Gastrocnemius medialis (tissue), 4 donors: ENCODE measurements at regions of chr7 and their contacts with region 1.

Region 1: GRCh38 chr7:121195874-121196755 is 132.7 kb upstream of the WNT16 start:
- DNase-seq: no peak
- ATAC-seq: no peak
- H3K4me3 ChIP-seq: no peak overlapping the region
- H3K27ac ChIP-seq: peak overlapping the region; percentile 79 to 90 (median 83)
- H3K4me1 ChIP-seq: peaks cover 71 to 91% of the 10 kb centered on the region in 2 donors
- H3K27me3 ChIP-seq: no peaks in the 10 kb centered on the region
- CTCF ChIP-seq: no peak
- POLR2A ChIP-seq: no peak

Region 2: GRCh38 chr7:120996333-120996987 is 199.7 kb before region 1 on chr7:
- in situ Hi-C with region 1: no loop called
- intact Hi-C with region 1: loop called (anchors 10 kb)
- DNase-seq: peak; percentile 71 to 72
- ATAC-seq: no peak
- H3K4me3 ChIP-seq: no peak overlapping the region
- H3K27ac ChIP-seq: peak overlapping the region; percentile 91 to 98 (median 94)
- H3K4me1 ChIP-seq: peaks cover 82 to 90% of the 10 kb centered on the region in 2 donors
- H3K27me3 ChIP-seq: no peaks in the 10 kb centered on the region
- CTCF ChIP-seq: no peak
- POLR2A ChIP-seq: no peak